ENCODE measurements at regions of chr17 and their contacts with region 1.

Region 1: DNA sequence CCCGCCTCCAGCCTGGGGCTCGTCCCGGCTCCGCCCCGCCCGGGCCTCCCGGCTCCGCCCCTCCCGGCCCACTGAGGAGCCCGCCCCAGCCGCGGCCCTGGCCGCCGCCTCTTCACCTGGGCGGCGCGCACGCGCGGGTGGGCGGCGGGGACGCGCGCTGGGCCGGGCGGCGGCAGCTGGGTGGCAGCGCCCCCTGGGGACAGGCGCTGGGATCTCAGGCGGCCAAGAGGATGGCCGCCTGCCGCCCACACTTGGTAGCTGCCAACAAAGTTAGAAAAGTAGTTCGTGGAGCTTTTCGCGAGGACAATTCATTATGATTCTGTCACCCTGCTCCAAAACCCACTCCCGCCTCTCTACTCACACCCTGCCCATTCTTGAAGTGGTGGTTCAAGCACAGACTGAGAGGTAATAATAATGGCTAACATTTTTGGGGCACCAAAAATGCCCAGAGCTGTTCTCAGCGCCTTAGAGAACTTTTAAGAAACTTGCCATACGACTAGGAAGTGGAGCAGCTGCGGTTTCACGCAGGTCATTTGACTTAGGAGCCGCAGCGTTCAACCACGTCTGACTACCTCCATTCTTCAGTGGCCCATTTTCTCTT is 340 bp upstream of the MYO1D start:
- DNase-seq: peak; percentile 94
- ATAC-seq: peak; percentile 97
- H3K4me3 Mint-ChIP-seq: peak overlapping the region; percentile 66
- H3K27ac Mint-ChIP-seq: peak overlapping the region; percentile 87
- H3K4me1 Mint-ChIP-seq: peaks cover 16% of the 10 kb centered on the region
- H3K27me3 Mint-ChIP-seq: peaks cover 12% of the 10 kb centered on the region

Region 2: DNA sequence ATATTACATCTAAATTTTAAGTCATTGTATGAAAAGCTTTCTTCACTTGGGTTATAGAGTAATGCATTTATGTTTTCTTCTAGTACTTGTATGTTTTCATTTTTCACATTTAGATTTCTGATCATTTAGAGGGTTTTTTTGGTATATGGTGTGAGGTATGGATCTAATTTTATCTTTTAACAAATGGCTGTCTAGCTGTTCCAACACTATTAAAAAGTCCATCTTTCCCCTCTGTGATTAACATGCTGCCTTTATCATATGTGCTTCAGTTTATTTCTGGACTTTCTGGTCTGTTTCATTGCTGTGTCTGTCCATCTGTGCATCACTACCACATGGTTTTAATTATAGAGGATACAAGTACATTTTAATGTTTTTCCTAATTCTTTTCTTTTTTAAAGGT is 164.2 kb before region 1 on chr17:
- CTCF ChIA-PET with region 1: no interaction called
- DNase-seq: no peak
- ATAC-seq: no peak
- H3K4me3 Mint-ChIP-seq: no peak overlapping the region
- H3K27ac Mint-ChIP-seq: no peak overlapping the region
- H3K4me1 Mint-ChIP-seq: no peaks in the 10 kb centered on the region
- H3K27me3 Mint-ChIP-seq: no peaks in the 10 kb centered on the region

Region 3: GRCh38 chr17:32732900-32733299 is 144.4 kb before region 1 on chr17:
- CTCF ChIA-PET with region 1: no interaction called
- DNase-seq: no peak
- ATAC-seq: no peak
- H3K4me3 Mint-ChIP-seq: no peak overlapping the region
- H3K27ac Mint-ChIP-seq: no peak overlapping the region
- H3K4me1 Mint-ChIP-seq: no peaks in the 10 kb centered on the region
- H3K27me3 Mint-ChIP-seq: no peaks in the 10 kb centered on the region

Region 4: GRCh38 chr17:32794533-32795246 is 82.6 kb before region 1 on chr17:
- CTCF ChIA-PET with region 1: interaction called, 17 read pairs
- DNase-seq: no peak
- ATAC-seq: no peak
- H3K4me3 Mint-ChIP-seq: no peak overlapping the region
- H3K27ac Mint-ChIP-seq: no peak overlapping the region
- H3K4me1 Mint-ChIP-seq: peaks cover 3% of the 10 kb centered on the region
- H3K27me3 Mint-ChIP-seq: peaks cover 3% of the 10 kb centered on the region

Region 5: GRCh38 chr17:32828822-32829221 is 48.4 kb before region 1 on chr17:
- CTCF ChIA-PET with region 1: interaction called, 16 read pairs
- DNase-seq: no peak
- ATAC-seq: no peak
- H3K4me3 Mint-ChIP-seq: no peak overlapping the region
- H3K27ac Mint-ChIP-seq: no peak overlapping the region
- H3K4me1 Mint-ChIP-seq: peaks cover 24% of the 10 kb centered on the region
- H3K27me3 Mint-ChIP-seq: peaks cover 5% of the 10 kb centered on the region

Region 6: GRCh38 chr17:32859857-32860525 is 17.3 kb before region 1 on chr17:
- CTCF ChIA-PET with region 1: interaction called, 18 read pairs
- DNase-seq: no peak
- ATAC-seq: peak; percentile 42
- H3K4me3 Mint-ChIP-seq: no peak overlapping the region
- H3K27ac Mint-ChIP-seq: no peak overlapping the region
- H3K4me1 Mint-ChIP-seq: peaks cover 8% of the 10 kb centered on the region
- H3K27me3 Mint-ChIP-seq: no peaks in the 10 kb centered on the region

Region 7: DNA sequence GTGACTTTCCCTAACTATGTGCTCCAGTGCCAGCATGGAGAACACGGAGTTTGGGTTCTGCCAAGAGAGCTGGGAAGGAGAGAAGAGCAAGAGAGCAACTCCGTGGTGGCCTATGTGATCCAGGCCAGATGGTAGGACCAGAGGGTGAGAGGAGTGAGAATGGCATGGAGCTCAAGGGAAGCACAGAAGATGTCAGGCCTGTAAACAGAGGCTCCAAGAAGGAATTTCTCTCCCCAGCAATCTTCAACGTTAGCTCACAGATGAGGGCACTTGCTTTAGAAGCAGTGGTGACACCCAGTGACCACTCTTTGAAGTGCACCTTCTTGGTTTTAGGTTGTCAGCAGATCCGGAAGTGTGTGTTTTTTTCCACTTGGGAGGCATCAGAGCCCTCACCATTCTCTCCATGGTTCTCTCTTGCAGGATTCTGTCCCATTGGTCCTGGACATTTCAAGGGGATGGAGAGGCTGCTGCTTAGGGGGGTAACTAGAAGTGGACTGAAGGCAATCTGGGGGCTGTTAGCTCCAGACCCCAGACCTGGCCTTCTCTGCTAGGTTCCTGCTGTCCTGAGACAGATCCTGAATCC is 32.6 kb after region 1 on chr17:
- CTCF ChIA-PET with region 1: interaction called, 190 read pairs
- DNase-seq: peak; percentile 87
- ATAC-seq: peak; percentile 84
- H3K4me3 Mint-ChIP-seq: no peak overlapping the region
- H3K27ac Mint-ChIP-seq: peak overlapping the region; percentile 26
- H3K4me1 Mint-ChIP-seq: peaks cover 37% of the 10 kb centered on the region
- H3K27me3 Mint-ChIP-seq: peaks cover 7% of the 10 kb centered on the region

Region 8: GRCh38 chr17:32936894-32937500 is 59.7 kb after region 1 on chr17:
- CTCF ChIA-PET with region 1: interaction called, 47 read pairs
- DNase-seq: peak; percentile 72
- ATAC-seq: peak; percentile 86
- H3K4me3 Mint-ChIP-seq: peak overlapping the region; percentile 37
- H3K27ac Mint-ChIP-seq: no peak overlapping the region
- H3K4me1 Mint-ChIP-seq: peaks cover 7% of the 10 kb centered on the region
- H3K27me3 Mint-ChIP-seq: peaks cover 39% of the 10 kb centered on the region

Measured in activated CD8-positive, alpha-beta memory T cell treated with anti-CD3 and anti-CD28 coated beads, Interleukin-2, amount 10 ng/mL, durations not matched to agents 7 days and 5 days (primary cell).